ENCODE measurements at regions of chr19 and their contacts with region 1.

Region 1: DNA sequence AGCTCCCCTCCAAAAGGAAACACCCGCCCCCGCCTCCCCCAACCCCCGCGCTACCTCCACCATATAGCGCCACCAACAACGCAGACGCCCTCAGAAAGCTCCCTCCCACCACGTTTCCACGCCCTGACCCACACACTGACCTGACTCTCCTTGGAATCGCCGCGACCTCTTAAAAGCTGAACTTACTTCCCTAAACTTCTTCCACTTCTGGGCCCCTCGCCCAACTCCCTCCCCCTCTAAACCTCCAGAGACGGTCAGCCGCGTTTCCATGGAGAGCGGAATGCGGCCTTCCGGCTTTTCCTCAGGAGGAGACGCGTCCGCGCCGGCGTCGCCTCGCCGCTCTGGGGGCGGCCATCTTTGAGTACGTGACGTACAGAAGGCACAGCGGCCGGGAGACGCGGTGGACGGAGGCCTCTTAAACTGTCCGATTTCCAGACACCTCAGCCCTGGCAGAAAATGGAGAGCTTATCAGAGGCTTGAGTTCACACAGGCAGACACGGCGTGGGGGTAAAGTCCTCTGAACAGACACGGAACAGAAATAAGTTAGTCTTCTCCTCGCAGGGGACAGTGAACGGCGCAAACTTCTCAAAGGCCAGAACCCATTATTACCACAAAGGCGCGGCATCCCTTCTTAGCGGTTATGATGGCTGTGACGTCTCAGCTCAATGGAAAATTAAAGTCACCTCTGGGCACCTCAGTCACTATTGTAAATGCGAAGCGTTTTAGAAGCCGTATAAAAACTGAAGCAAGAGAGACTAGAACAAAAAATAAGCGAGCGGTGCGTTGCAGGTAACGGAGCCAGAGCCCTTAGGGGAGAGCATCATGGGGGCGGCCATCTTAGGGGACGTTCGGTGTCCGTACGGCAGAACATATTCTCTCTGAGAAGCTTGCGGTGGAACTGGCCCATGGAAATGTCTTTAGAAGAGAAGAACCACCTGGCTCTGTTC is at the start of gene ZNF432:
- DNase-seq: peak; percentile 95 to 96
- ATAC-seq: peak; percentile 97 to 99 (median 99)
- H3K4me3 ChIP-seq: peak within 1 kb of the TSS; percentile 47 to 73 (median 62)
- H3K27ac ChIP-seq: peak within 1 kb of the TSS; percentile 88 to 99 (median 94)
- H3K4me1 ChIP-seq: peaks cover 0 to 23% (median 11%) of the 10 kb centered on the region in 9 donors
- H3K27me3 ChIP-seq: no peaks in the 10 kb centered on the region
- CTCF ChIP-seq: no peak
- total RNA-seq, gene ZNF432: 5.1 to 11.4 (median 8.7) TPM

Region 2: DNA sequence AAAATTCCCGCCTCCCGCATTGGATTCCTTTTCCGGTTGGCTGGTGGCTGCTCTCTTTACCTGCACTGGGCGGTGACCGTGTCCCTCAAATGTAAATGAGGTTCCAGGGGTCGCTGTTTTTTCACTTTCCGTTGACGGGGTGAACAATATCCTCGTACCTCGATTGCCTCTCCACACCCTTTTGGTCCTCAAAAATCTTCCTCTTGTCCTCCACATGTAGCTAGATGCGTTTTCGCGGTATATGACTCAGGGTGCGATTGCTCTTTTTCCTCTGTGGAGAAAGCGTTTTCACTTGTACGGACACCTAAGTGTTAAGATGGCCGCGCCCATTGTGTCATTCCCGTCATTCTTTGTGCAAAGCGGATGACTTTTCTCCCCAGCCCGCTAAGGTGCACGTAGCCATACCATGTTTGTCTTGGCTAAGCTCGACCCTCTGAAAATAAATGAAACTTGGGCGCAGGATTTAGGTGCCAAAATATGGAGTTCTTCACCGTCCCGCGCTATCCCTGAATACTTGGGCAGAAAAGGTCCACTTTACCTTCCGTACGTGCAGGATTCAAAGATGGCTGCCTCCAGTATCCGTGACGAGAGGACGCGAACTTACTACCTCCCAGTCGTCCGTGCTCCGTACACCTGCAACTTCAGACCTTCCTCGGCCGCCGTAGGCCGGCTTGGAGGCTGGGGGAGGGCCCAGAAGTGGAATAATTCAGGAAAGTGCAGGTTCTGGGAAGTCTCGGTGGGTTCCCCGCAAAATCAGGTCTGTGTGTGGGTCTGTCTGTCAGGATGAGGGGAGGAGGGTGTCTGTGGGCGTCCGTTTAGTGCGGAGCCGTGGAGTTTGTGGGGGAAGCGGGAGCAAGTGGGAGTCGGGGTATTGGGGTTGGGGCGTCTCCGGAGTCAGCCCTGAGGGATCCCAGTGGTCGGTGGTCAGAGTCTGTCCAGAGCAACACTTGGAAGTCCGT is 121.8 kb before region 1 on chr19 and contains the start of gene ZNF613:
- intact Hi-C with region 1: loop called in 1 of 10 experiments (anchors 2 kb)
- DNase-seq: peak; percentile 86 to 92
- ATAC-seq: peak; percentile 96 to 99 (median 98)
- H3K4me3 ChIP-seq: peak within 1 kb of the TSS; percentile 69 to 91 (median 80)
- H3K27ac ChIP-seq: peak within 1 kb of the TSS; percentile 81 to 96 (median 89)
- H3K4me1 ChIP-seq: peaks cover 0 to 13% (median 10%) of the 10 kb centered on the region in 9 donors
- H3K27me3 ChIP-seq: no peaks in the 10 kb centered on the region
- CTCF ChIP-seq: peak in 6 of 9 donors; percentile 21 to 57 (median 36)
- total RNA-seq, gene ZNF613: 2.4 to 7.1 (median 5.2) TPM

Region 3: DNA sequence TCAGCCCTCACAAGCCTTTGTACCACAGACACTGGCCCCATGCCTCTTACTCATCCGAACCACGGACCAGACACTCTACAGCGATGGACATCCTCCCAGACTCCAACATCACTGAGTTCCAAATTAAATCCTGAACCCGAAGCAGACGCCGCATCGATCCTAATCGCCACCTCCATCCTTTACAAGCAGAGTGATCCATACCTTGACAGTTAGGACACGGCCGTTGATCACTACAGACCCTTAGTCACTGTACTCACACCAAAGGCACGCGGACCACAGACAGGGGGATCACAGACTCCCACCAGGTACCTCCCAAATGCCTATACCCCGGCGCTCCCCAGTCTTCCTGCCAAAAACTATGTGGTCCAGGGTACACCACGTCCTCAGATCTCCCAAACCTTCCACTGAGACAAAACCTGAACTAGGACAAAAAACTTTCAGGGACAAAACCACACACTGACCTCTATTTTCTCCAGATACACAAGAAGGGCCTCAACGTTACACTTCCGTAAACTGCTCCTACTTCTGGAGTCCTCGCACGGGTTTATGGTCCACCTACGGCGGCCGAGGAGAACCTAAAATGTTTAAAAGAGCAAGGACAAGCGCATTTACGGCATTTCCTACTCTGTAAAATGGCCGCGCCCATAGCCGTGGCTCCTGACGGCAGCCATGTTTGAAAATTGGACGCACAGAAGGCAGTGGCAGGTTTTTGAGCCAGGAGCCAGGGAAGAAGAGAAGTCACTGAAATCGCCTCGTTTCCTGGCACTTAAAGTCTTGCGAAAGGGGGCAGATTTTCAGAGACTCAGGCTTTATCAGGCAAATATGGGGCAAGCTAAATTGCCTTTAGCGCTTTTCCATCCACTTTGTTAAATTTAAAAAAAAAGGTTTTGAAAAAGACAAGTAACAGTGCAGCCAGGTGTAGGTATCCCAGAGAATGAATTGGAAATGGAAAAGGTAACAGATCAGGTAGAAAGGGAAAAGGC is 62.2 kb before region 1 on chr19 and contains the start of gene ZNF350:
- intact Hi-C with region 1: loop called in 1 of 10 experiments (anchors 5 kb)
- DNase-seq: peak; percentile 84 to 97
- ATAC-seq: peak; percentile 98 to 100 (median 99)
- H3K4me3 ChIP-seq: peak within 1 kb of the TSS; percentile 68 to 93 (median 84)
- H3K27ac ChIP-seq: peak within 1 kb of the TSS in 9 of 10 donors; percentile 34 to 90 (median 76)
- H3K4me1 ChIP-seq: peaks cover 7 to 37% (median 16%) of the 10 kb centered on the region in 9 donors
- H3K27me3 ChIP-seq: no peaks in the 10 kb centered on the region
- CTCF ChIP-seq: no peak
- total RNA-seq, gene ZNF350: 5.3 to 10.1 (median 7.5) TPM

Region 4: DNA sequence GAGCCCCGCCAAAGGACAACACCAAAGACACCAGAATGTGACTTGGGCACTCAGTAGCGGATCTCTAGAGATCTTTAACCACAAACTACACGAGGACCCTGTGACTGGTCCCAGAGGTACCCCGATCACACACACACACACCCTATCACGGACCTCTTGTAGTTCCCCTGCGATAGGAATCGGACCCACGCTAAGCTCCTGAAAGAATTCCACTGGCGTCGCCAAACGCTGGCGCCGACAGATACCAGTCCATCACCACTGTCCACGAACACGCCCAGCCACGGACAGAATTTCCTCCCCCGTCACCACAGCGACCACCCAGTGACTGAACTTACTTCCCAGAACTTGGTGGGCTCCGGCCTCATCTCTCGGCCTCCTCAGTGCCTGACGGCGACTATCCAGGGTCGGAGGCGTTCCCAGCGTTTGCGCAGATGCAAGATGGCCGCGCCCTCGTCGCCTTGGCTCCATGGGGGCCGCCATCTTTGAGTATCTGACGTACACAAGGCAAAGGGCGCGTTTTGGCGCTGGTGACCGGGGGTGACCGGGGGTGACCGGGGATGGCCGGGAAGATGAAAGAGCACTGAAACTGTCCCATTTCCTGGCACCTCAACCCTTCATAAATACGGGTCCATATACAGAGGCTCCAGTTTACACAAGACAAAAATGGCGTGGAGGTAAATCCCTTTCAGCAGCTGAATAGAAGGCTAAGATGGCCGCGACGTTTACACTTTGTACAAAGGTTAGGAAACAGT is 40.8 kb before region 1 on chr19 and contains the start of gene ZNF615:
- intact Hi-C with region 1: loop called in 3 of 10 experiments (anchors 2 kb)
- DNase-seq: peak; percentile 88 to 92
- ATAC-seq: peak; percentile 97 to 100 (median 100)
- H3K4me3 ChIP-seq: peak within 1 kb of the TSS; percentile 60 to 84 (median 80)
- H3K27ac ChIP-seq: peak within 1 kb of the TSS; percentile 62 to 92 (median 88)
- H3K4me1 ChIP-seq: peaks cover 0 to 23% (median 9%) of the 10 kb centered on the region in 9 donors
- H3K27me3 ChIP-seq: no peaks in the 10 kb centered on the region
- CTCF ChIP-seq: no peak
- total RNA-seq, gene ZNF615: 8.1 to 13.7 (median 10.1) TPM

Region 5: DNA sequence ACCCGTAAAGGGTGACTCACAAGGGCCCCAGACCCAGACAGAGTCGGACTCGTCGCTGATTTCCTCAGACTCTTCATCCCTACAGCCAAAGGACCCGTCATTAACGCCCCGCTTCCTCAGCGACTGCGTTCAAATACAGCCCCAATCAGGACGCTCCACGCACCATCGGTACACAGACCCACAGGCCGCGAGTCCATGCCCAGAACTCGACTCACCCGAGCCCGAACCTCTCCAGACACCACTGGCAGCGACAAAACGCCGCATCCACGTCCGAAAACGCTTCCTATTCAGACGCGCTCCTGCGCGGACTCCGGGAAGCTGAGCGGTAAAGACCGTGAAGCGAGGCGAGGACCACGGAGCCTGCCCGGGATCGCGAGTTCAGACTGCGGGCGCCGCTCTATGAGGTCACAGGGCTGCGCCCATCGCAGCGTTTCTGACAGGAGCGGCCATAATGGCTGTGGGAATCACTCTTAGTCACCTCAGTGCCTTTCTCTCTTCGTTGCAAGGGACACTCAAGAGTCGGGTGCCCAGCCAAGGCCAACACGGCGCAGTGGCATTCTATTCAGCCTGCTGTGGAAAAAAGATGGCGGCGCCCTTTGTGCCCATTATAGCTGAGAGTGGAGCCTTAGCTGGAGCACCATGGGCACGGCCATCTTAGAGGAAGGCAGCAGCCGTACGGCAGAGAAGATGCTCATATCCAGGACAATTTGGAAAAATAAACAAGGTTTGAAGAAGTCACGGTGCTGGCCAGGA is 20.6 kb before region 1 on chr19 and contains the start of gene ZNF614:
- intact Hi-C with region 1: loop called in 4 of 10 experiments (anchors 2 kb)
- DNase-seq: peak; percentile 86 to 90
- ATAC-seq: peak; percentile 98 to 99 (median 98)
- H3K4me3 ChIP-seq: peak within 1 kb of the TSS; percentile 47 to 88 (median 78)
- H3K27ac ChIP-seq: peak within 1 kb of the TSS; percentile 24 to 94 (median 92)
- H3K4me1 ChIP-seq: peaks cover 0 to 21% (median 15%) of the 10 kb centered on the region in 9 donors
- H3K27me3 ChIP-seq: no peaks in the 10 kb centered on the region
- CTCF ChIP-seq: peak in 1 of 9 donors; percentile 16
- total RNA-seq, gene ZNF614: 6.1 to 8.4 (median 6.8) TPM

Region 6: GRCh38 chr19:52095172-52096014 is 46.6 kb after region 1 on chr19 and contains the start of gene ZNF841:
- intact Hi-C with region 1: loop called in 2 of 10 experiments (anchors 2 to 5 kb)
- DNase-seq: peak; percentile 97 to 98
- ATAC-seq: peak; percentile 100
- H3K4me3 ChIP-seq: peak within 1 kb of the TSS; percentile 59 to 98 (median 80)
- H3K27ac ChIP-seq: peak within 1 kb of the TSS in 9 of 10 donors; percentile 66 to 88 (median 76)
- H3K4me1 ChIP-seq: peaks cover 6 to 30% (median 21%) of the 10 kb centered on the region in 9 donors
- H3K27me3 ChIP-seq: no peaks in the 10 kb centered on the region
- CTCF ChIP-seq: peak in 4 of 9 donors; percentile 8 to 47 (median 29)
- total RNA-seq, gene ZNF841: 6.7 to 10.7 (median 9.3) TPM

Region 7: DNA sequence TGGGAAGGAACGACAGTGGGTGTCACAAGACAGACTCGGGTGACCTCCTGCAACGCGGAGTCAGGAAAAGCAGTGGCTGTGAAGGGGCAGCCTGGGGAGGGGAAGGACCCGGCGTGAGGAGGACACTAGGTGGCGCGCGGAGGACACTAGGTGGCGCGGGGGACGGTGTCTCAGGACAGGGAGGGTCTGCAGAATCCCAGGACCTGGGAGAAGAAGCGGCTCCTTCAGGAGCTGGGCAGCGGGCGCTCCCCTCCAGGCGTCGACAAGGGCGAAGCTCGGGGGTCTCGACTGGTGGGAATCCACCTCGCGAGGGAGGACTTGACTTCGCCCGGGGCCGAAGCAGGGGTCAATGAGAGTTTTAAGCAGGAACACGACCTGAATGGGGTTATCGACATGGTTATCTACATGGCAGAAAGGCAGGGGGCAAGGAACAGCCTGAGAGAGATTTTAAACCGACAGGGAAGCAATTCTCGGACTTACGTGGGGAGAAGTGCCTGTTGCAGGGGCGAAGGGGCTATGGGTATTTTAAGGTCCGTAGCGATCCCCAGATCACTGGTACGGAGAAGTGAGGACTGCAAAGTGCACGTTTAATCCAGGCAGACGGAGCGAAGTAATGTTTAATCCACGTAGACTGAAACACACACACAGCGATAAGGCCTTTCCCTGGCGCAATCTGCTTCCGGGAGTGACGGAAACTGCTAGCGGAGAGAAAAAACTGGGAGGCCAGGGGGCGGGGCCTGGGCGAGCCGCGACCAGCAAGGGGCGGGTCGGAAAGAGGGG is 90.6 kb after region 1 on chr19 and contains the start of gene ZNF616:
- intact Hi-C with region 1: no loop called
- DNase-seq: peak; percentile 89 to 98
- ATAC-seq: peak; percentile 93 to 100 (median 98)
- H3K4me3 ChIP-seq: peak within 1 kb of the TSS; percentile 61 to 94 (median 80)
- H3K27ac ChIP-seq: peak within 1 kb of the TSS; percentile 42 to 96 (median 92)
- H3K4me1 ChIP-seq: peaks cover 2 to 24% (median 18%) of the 10 kb centered on the region in 9 donors
- H3K27me3 ChIP-seq: no peaks in the 10 kb centered on the region
- CTCF ChIP-seq: peak; percentile 62 to 95 (median 80)
- total RNA-seq, gene ZNF616: 4.9 to 8.0 (median 6.5) TPM

Measured in heart right ventricle (tissue), 16 donors.